ENCODE measurements at regions of chr11 and their contacts with region 1.

Region 1: GRCh38 chr11:79493555-79494171 is 52.8 kb upstream of the TENM4 start:
- DNase-seq: peak; percentile 30 to 43 (median 40)
- H3K4me3 ChIP-seq: no peak overlapping the region
- H3K4me3 Mint-ChIP-seq: no peak overlapping the region
- H3K27ac ChIP-seq: no peak overlapping the region
- H3K27ac Mint-ChIP-seq: no peak overlapping the region
- H3K4me1 ChIP-seq: no peaks in the 10 kb centered on the region
- H3K4me1 Mint-ChIP-seq: peaks cover 2% of the 10 kb centered on the region
- H3K27me3 ChIP-seq: peaks cover 2 to 9% of the 10 kb centered on the region in 2 donors
- H3K27me3 Mint-ChIP-seq: peaks cover 0 to 13% (median 3%) of the 10 kb centered on the region in 3 donors
- CTCF ChIP-seq: peak; percentile 89

Region 2: DNA sequence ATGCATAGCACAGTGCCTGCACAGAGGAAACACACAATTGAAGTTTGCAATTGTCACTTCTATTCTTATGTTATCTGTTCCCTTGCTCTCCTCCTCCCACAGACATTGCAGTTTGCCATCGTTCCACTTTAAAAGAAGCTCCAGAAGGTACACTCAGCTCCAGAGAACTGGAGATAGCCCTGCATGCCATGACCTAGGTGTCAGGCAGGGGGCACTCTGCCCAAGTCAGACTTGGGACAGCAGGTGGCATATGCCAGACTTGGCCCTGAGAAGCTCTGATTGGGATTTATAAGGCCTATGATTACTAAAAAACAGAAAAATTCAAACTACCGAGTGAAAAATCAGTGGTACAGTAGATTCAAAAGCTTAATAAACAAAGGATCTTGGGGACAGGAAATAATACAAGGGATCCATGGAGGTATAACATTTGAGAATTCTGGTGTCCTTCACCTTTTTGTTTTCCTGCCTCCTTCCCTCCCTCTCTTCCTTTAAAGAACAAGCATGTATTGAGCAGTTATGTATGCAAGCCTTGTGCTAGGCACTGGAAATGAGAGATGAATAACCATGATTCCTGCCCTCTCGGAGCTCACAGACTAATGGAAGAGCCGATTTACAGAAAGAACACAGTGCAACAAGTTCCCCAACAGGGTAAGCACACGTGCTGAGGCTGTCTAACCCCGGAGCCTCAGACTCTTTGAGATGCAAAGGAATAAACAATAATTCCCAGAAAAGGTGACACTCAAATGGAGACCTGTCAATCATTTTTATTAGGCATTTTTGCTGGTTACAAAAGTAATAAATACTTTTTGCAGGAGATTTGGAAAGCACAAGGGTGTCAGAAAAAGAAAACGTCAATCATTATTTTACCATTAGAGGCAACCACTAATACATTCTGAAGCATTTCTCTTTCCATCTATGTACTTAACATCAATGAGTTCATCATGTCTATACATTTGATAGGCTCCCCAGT is 92.7 kb before region 1 on chr11:
- intact Hi-C with region 1: loop called (anchors 10 kb)
- DNase-seq: peak; percentile 7 to 12 (median 8)
- H3K4me3 ChIP-seq: no peak overlapping the region
- H3K4me3 Mint-ChIP-seq: no peak overlapping the region
- H3K27ac ChIP-seq: no peak overlapping the region
- H3K27ac Mint-ChIP-seq: no peak overlapping the region
- H3K4me1 ChIP-seq: peaks cover 19 to 22% of the 10 kb centered on the region in 2 donors
- H3K4me1 Mint-ChIP-seq: peaks cover 22% of the 10 kb centered on the region
- H3K27me3 ChIP-seq: peaks cover 10 to 51% of the 10 kb centered on the region in 2 donors
- H3K27me3 Mint-ChIP-seq: peaks cover 3 to 16% (median 6%) of the 10 kb centered on the region in 3 donors
- CTCF ChIP-seq: peak; percentile 64

Region 3: DNA sequence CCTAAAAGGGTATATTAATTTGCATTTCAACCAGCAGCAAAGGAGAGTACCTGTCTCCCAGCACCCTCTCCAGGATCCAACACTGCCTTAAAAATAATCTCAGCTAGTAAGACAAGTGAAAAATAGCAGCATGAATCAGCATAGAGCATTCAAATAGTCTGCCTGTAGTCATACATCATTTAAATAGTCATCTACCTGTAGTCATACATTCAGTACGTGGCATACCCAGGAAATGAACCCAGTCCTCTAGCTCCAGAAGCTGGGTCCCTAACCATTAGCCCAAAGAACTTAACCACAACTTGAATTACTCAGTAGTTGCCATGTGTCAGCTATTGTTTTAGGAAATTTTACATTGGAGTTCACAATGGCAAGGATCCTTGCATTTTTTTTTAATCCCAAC is 62.1 kb before region 1 on chr11:
- intact Hi-C with region 1: no loop called
- DNase-seq: no peak
- H3K4me3 ChIP-seq: no peak overlapping the region
- H3K4me3 Mint-ChIP-seq: no peak overlapping the region
- H3K27ac ChIP-seq: no peak overlapping the region
- H3K27ac Mint-ChIP-seq: no peak overlapping the region
- H3K4me1 ChIP-seq: no peaks in the 10 kb centered on the region
- H3K4me1 Mint-ChIP-seq: peaks cover under 1% of the 10 kb centered on the region
- H3K27me3 ChIP-seq: peaks cover 56 to 65% of the 10 kb centered on the region in 2 donors
- H3K27me3 Mint-ChIP-seq: peaks cover 33 to 60% (median 37%) of the 10 kb centered on the region in 3 donors
- CTCF ChIP-seq: no peak

Region 4: DNA sequence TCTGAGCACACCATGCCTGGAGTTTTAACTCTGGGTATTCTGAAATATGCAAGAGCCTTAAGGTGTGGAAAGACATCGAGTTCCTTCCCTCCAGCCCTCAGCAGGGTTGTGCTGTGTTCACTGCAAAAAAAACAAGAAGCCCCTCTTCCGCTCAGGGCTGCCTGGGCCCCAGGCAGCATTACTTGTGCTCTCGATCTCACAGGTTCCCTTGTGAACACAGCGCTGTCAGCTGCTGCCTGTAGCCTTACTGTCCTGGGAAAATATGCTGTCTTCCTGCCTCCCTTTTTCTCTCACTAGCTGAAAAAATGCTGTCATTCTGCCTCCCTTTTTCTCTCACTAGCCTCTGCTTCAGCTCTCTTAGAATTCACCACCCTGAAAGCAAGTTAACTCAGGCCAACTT is 37.2 kb before region 1 on chr11:
- intact Hi-C with region 1: no loop called
- DNase-seq: no peak
- H3K4me3 ChIP-seq: no peak overlapping the region
- H3K4me3 Mint-ChIP-seq: no peak overlapping the region
- H3K27ac ChIP-seq: no peak overlapping the region
- H3K27ac Mint-ChIP-seq: no peak overlapping the region
- H3K4me1 ChIP-seq: no peaks in the 10 kb centered on the region
- H3K4me1 Mint-ChIP-seq: peaks cover 6% of the 10 kb centered on the region
- H3K27me3 ChIP-seq: peaks cover 4 to 34% of the 10 kb centered on the region in 2 donors
- H3K27me3 Mint-ChIP-seq: peaks cover 8 to 35% (median 8%) of the 10 kb centered on the region in 3 donors
- CTCF ChIP-seq: no peak

Measured in CD14-positive monocyte (primary cell).